Activated CD4-positive, alpha-beta memory T cell treated with anti-CD3 and anti-CD28 coated beads, Interleukin-2, amount 10 ng/mL, durations not matched to agents 7 days and 5 days (primary cell): ENCODE measurements at regions of chr18 and their contacts with region 1.

Region 1: DNA sequence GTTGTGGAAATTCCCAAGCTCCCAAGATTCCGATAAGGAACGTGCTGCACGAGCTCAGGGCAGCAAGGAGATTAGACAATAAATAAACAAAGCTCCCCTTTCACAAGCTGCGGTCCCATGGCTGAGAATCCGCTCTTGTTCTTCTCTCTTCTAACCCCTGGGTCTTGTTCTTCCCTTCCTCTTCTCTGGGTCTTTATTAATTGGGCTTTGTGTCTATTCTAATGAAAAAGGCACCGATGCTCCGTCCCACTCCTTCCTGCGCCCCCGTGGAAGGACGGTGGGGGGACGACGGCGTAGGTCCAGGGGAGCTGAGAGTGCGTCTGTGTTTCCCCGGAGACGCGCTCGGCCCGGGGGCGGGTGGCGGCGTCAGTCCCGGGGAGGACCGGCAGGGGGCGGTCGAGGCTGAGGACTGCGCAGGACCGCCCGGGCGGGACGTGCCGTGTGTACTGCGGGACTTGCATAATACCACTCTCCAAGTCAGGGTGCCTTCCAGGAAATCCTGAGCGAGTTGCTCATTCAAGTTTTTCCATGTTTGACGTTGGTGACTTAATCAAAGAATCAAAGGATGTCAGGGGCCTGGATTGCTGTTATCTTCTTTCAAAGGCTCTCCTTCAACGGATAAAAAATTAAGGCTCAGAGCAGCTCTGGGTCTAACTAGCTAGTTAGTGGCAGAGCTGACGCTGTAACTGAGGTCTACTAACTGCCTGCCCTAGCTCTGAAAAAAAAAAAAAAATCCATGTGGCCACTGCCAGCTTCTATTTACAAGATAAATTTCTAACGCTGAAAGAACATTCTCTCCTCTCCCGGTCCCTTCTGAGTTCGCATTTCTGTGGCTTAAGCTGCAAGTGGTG is 321.4 kb downstream of the TGIF1 start:
- DNase-seq: peak; percentile 82
- H3K4me3 Mint-ChIP-seq: peak overlapping the region; percentile 16
- H3K27ac Mint-ChIP-seq: no peak overlapping the region
- H3K4me1 Mint-ChIP-seq: peaks cover 12% of the 10 kb centered on the region
- H3K27me3 Mint-ChIP-seq: peaks cover 47% of the 10 kb centered on the region

Region 2: GRCh38 chr18:3665780-3666525 is 105.4 kb before region 1 on chr18:
- CTCF ChIA-PET with region 1: no interaction called
- POLR2A ChIA-PET with region 1: no interaction called
- DNase-seq: peak; percentile 76
- H3K4me3 Mint-ChIP-seq: no peak overlapping the region
- H3K27ac Mint-ChIP-seq: no peak overlapping the region
- H3K4me1 Mint-ChIP-seq: peaks cover 26% of the 10 kb centered on the region
- H3K27me3 Mint-ChIP-seq: no peaks in the 10 kb centered on the region

Region 3: DNA sequence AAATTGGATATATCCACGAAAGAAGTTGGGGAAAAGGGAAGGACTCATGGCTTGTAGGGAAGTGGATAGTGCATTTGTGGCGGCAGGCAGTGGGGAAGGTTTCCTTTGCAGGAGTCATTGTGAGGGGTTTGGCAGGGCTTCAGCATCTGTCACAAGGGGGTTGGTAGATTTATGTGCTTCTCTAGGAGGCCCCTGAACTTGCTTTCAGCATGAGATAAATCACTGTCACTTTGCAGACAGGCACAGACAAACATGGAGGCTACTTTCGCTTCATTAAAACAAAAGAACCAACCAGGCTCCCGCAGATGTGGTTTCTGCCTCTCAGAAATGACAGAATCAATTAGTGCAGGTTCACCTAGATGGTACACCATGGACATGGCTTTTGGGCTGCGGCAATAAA is 19.4 kb after region 1 on chr18:
- CTCF ChIA-PET with region 1: interaction called, 14 read pairs
- POLR2A ChIA-PET with region 1: no interaction called
- DNase-seq: no peak
- H3K4me3 Mint-ChIP-seq: no peak overlapping the region
- H3K27ac Mint-ChIP-seq: no peak overlapping the region
- H3K4me1 Mint-ChIP-seq: no peaks in the 10 kb centered on the region
- H3K27me3 Mint-ChIP-seq: peaks cover 9% of the 10 kb centered on the region

Region 4: DNA sequence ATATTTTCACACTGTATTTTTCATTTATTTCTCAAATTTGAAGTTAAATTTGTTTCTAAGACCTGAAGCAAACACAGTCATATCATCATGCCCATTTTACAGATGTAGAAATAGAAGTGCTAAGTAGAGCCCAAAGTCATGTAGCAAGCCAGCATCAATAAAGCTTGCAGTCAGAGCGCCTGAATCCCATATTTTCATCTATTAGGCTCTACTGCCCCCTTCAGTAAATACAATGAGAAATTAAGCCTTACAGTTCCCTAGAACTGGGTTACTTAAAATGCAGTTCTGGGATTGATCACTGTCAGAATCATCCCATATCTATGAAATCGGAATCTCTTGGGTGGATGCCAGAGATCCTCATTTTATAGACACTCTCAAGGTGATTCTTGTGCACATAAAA is 98.5 kb after region 1 on chr18:
- CTCF ChIA-PET with region 1: interaction called, 15 read pairs
- POLR2A ChIA-PET with region 1: no interaction called
- DNase-seq: no peak
- H3K4me3 Mint-ChIP-seq: no peak overlapping the region
- H3K27ac Mint-ChIP-seq: no peak overlapping the region
- H3K4me1 Mint-ChIP-seq: no peaks in the 10 kb centered on the region
- H3K27me3 Mint-ChIP-seq: peaks cover 18% of the 10 kb centered on the region

Region 5: GRCh38 chr18:3995476-3996102 is 224.2 kb after region 1 on chr18:
- CTCF ChIA-PET with region 1: interaction called, 62 read pairs
- POLR2A ChIA-PET with region 1: no interaction called
- DNase-seq: peak; percentile 56
- H3K4me3 Mint-ChIP-seq: no peak overlapping the region
- H3K27ac Mint-ChIP-seq: no peak overlapping the region
- H3K4me1 Mint-ChIP-seq: no peaks in the 10 kb centered on the region
- H3K27me3 Mint-ChIP-seq: peaks cover 11% of the 10 kb centered on the region

Region 6: DNA sequence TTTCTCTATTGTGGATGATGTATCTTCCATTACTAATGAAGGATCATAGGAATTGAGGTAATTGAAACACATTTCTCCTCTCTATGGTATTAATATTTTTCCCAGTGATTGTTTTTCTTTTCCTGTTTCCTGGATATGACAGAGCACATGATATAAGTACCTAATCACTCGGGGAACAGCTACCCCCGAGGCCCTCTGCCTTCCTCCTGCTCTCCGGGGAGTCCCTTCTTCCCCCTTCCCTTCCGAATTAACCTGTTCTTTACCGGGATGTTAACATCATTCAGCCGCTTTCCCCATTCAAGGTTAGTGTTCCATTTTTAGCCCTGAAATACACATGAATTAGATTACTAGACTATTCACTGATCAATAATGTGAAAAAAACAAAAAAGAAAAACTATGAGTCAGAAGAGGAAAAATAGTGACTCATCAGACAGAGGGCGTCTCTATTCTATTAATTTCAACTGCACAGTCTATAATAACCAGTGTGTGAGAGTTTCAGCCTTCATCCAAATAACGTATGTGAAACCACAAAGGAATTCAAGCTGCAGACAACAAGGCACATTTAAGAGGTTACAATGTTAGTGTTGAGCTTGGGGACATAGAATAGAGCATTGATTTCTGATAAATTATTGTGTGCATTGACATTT is 233.0 kb after region 1 on chr18:
- CTCF ChIA-PET with region 1: interaction called, 10 read pairs
- POLR2A ChIA-PET with region 1: no interaction called
- DNase-seq: no peak
- H3K4me3 Mint-ChIP-seq: no peak overlapping the region
- H3K27ac Mint-ChIP-seq: no peak overlapping the region
- H3K4me1 Mint-ChIP-seq: peaks cover 5% of the 10 kb centered on the region
- H3K27me3 Mint-ChIP-seq: peaks cover 33% of the 10 kb centered on the region

Region 7: GRCh38 chr18:4068552-4069158 is 297.3 kb after region 1 on chr18:
- CTCF ChIA-PET with region 1: interaction called, 16 read pairs
- POLR2A ChIA-PET with region 1: no interaction called
- DNase-seq: peak; percentile 31
- H3K4me3 Mint-ChIP-seq: no peak overlapping the region
- H3K27ac Mint-ChIP-seq: no peak overlapping the region
- H3K4me1 Mint-ChIP-seq: no peaks in the 10 kb centered on the region
- H3K27me3 Mint-ChIP-seq: peaks cover 2% of the 10 kb centered on the region